OCI-LY7 (cell line): ENCODE measurements at regions of chrX and their contacts with region 1.

Region 1: GRCh38 chrX:31649201-31649600 is 577.4 kb upstream of the FTHL17 start:
- DNase-seq: no peak
- H3K4me3 ChIP-seq: no peak overlapping the region
- H3K27ac ChIP-seq: no peak overlapping the region
- H3K4me1 ChIP-seq: no peaks in the 10 kb centered on the region
- CTCF ChIP-seq: no peak

Region 2: GRCh38 chrX:31593353-31593752 is 55.8 kb before region 1 on chrX:
- CTCF ChIA-PET with region 1: no interaction called
- POLR2A ChIA-PET with region 1: no interaction called
- intact Hi-C with region 1: no loop called
- DNase-seq: no peak
- H3K4me3 ChIP-seq: no peak overlapping the region
- H3K27ac ChIP-seq: no peak overlapping the region
- H3K4me1 ChIP-seq: no peaks in the 10 kb centered on the region
- CTCF ChIP-seq: no peak

Region 3: DNA sequence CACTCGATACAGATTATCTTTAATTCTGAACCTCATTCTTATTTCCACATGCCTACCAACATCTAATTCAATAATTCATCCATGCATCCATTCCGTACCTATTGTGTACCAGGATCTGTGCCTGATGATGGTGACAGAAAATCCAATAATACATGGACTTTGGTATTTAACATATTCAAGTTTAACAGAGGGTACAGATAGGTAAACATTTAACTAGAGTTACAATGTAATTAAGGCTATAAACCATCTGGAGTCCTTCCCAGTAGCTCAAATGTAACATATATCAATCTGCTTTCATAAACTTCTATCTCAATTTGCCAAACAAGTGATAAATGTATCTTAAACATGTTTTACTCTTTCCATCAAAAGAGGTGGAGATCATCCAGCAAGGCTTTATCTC is 15.9 kb before region 1 on chrX:
- CTCF ChIA-PET with region 1: interaction called, 12 read pairs
- POLR2A ChIA-PET with region 1: no interaction called
- intact Hi-C with region 1: no loop called
- DNase-seq: no peak
- H3K4me3 ChIP-seq: no peak overlapping the region
- H3K27ac ChIP-seq: no peak overlapping the region
- H3K4me1 ChIP-seq: no peaks in the 10 kb centered on the region
- CTCF ChIP-seq: no peak